ENCODE measurements at regions of chr13 and their contacts with region 1.

Region 1: GRCh38 chr13:72666391-72666790 is 61.0 kb downstream of the MZT1 start:
- DNase-seq: no peak
- ATAC-seq: no peak
- H3K4me3 ChIP-seq: no peak overlapping the region
- H3K27ac ChIP-seq: no peak overlapping the region
- H3K4me1 ChIP-seq: no peaks in the 10 kb centered on the region
- H3K27me3 ChIP-seq: no peaks in the 10 kb centered on the region
- CTCF ChIP-seq: no peak
- EP300 ChIP-seq: no peak
- POLR2A ChIP-seq: no peak
- RAD21 ChIP-seq: no peak

Region 2: GRCh38 chr13:72599178-72599743 is 67.1 kb before region 1 on chr13:
- CTCF ChIA-PET with region 1: no interaction called
- POLR2A ChIA-PET with region 1: no interaction called
- RAD21 ChIA-PET with region 1: no interaction called
- SMC1A ChIA-PET with region 1: no interaction called
- in situ Hi-C with region 1: loop called (anchors 10 kb)
- intact Hi-C with region 1: no loop called
- DNase-seq: no peak
- ATAC-seq: no peak
- H3K4me3 ChIP-seq: no peak overlapping the region
- H3K27ac ChIP-seq: no peak overlapping the region
- H3K4me1 ChIP-seq: no peaks in the 10 kb centered on the region
- H3K27me3 ChIP-seq: no peaks in the 10 kb centered on the region
- CTCF ChIP-seq: no peak
- EP300 ChIP-seq: no peak
- POLR2A ChIP-seq: no peak
- RAD21 ChIP-seq: no peak

Region 3: GRCh38 chr13:72686766-72687165 is 20.4 kb after region 1 on chr13:
- CTCF ChIA-PET with region 1: no interaction called
- POLR2A ChIA-PET with region 1: no interaction called
- RAD21 ChIA-PET with region 1: no interaction called
- SMC1A ChIA-PET with region 1: no interaction called
- in situ Hi-C with region 1: no loop called
- intact Hi-C with region 1: no loop called
- DNase-seq: no peak
- ATAC-seq: no peak
- H3K4me3 ChIP-seq: no peak overlapping the region
- H3K27ac ChIP-seq: no peak overlapping the region
- H3K4me1 ChIP-seq: no peaks in the 10 kb centered on the region
- H3K27me3 ChIP-seq: no peaks in the 10 kb centered on the region; a peak in 1 of 4 replicates
- CTCF ChIP-seq: no peak
- EP300 ChIP-seq: no peak
- POLR2A ChIP-seq: no peak
- RAD21 ChIP-seq: no peak

Region 4: GRCh38 chr13:72745260-72745659 is 78.9 kb after region 1 on chr13:
- CTCF ChIA-PET with region 1: no interaction called
- POLR2A ChIA-PET with region 1: no interaction called
- RAD21 ChIA-PET with region 1: no interaction called
- SMC1A ChIA-PET with region 1: no interaction called
- in situ Hi-C with region 1: no loop called
- intact Hi-C with region 1: no loop called
- DNase-seq: no peak
- ATAC-seq: peak; percentile 27; the same call in 2 of the 3 replicates
- H3K4me3 ChIP-seq: no peak overlapping the region
- H3K27ac ChIP-seq: no peak overlapping the region
- H3K4me1 ChIP-seq: no peaks in the 10 kb centered on the region
- H3K27me3 ChIP-seq: no peaks in the 10 kb centered on the region
- CTCF ChIP-seq: no peak
- EP300 ChIP-seq: no peak
- POLR2A ChIP-seq: no peak
- RAD21 ChIP-seq: no peak

Region 5: GRCh38 chr13:72781451-72782439 is 115.4 kb after region 1 on chr13 and contains the starts of genes DIS3 and PIBF1:
- CTCF ChIA-PET with region 1: no interaction called
- POLR2A ChIA-PET with region 1: no interaction called
- RAD21 ChIA-PET with region 1: no interaction called
- SMC1A ChIA-PET with region 1: no interaction called
- in situ Hi-C with region 1: no loop called
- intact Hi-C with region 1: no loop called
- DNase-seq: peak; percentile 93
- ATAC-seq: peak; percentile 96
- H3K4me3 ChIP-seq: peak within 1 kb of the TSS; percentile 92
- H3K27ac ChIP-seq: peak within 1 kb of the TSS; percentile 88
- H3K4me1 ChIP-seq: no peaks in the 10 kb centered on the region
- H3K27me3 ChIP-seq: no peaks in the 10 kb centered on the region
- CTCF ChIP-seq: peak in 1 of 3 experiments; percentile 30; a peak in 1 of 6 replicates
- EP300 ChIP-seq: no peak
- POLR2A ChIP-seq: peak; percentile 88
- RAD21 ChIP-seq: no peak
- polyA plus RNA-seq, gene DIS3: 10.8 to 13.6 TPM
- polyA plus RNA-seq, gene PIBF1: 6.4 to 7.7 TPM